Dorsolateral prefrontal cortex (tissue), 120 donors: ENCODE measurements at regions of chr12 and their contacts with region 1.

Region 1: DNA sequence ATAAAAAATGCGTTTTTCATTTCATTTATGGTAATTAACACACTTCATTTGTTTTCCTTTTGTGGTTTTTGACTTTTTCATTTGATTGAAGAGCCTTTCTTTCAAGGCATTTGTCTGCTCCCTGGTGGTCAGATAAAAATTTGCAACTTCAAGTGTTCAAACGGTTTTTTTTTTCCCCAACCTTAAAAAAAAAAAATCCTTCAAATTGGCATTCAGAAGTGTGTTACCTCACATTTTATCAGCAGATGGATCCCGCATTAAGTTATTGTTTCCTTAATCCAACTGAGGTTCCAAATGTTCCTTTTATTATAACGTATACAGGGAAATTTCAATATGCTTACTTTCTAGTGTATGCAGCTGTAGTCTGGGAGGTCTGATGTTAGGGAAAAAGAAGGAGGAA is 47.2 kb downstream of the MYF5 start:
- DNase-seq: peak in 1 of 10 donors; percentile 4
- H3K4me3 ChIP-seq: no peak overlapping the region
- H3K27ac ChIP-seq: no peak overlapping the region
- H3K27me3 ChIP-seq: no peaks in the 10 kb centered on the region
- CTCF ChIP-seq: peak; percentile 45 to 80 (median 69)

Region 2: GRCh38 chr12:80411787-80412186 is 352.1 kb before region 1 on chr12:
- intact Hi-C with region 1: loop called in 1 of 2 experiments (anchors 2 kb)
- DNase-seq: no peak
- H3K4me3 ChIP-seq: no peak overlapping the region
- H3K27ac ChIP-seq: no peak overlapping the region
- H3K27me3 ChIP-seq: no peaks in the 10 kb centered on the region
- CTCF ChIP-seq: no peak

Region 3: GRCh38 chr12:80472902-80473500 is 290.9 kb before region 1 on chr12:
- intact Hi-C with region 1: loop called in 1 of 2 experiments (anchors 5 kb)
- DNase-seq: no peak
- H3K4me3 ChIP-seq: no peak overlapping the region
- H3K27ac ChIP-seq: no peak overlapping the region
- H3K27me3 ChIP-seq: no peaks in the 10 kb centered on the region
- CTCF ChIP-seq: peak in 47 of 56 donors; percentile 5 to 52 (median 35)

Region 4: GRCh38 chr12:80648881-80649280 is 115.0 kb before region 1 on chr12:
- intact Hi-C with region 1: no loop called
- DNase-seq: no peak
- H3K4me3 ChIP-seq: no peak overlapping the region
- H3K27ac ChIP-seq: no peak overlapping the region
- H3K27me3 ChIP-seq: no peaks in the 10 kb centered on the region
- CTCF ChIP-seq: no peak

Region 5: DNA sequence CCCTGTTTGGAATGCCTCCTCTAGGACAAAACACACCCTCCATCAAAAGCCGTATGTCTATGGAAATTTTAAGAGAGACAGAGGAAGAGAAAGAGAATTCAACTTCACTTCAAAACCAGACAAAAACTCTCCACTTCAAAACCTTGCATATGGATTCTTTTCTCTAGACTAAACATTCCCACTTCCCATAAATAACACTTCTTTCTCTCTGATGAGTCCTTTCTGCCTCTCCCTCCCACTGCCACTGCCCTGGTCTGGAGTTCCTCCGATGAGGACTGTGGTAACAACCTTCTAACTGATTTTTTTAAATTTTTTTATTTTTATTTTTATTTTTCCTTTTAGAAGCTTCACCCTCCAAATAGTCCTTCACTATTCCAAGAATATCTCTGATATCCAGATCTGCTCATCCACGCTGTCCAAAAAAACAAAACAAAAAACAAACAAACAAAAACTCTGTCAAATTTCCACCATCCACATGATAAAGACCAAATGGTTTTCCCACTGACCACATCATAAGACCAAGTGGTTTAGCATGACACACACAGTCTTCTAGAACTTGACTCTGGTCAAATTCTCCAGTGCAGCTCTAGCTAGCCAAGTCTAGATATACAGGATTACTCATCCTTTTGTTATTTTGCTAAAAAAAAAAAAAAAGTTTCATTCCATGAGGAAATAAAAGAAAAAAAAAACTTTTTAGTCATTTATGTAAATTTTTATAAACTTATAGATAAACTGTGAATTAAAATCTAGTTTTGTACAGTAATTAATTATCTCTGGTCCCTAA is 739.2 kb after region 1 on chr12:
- intact Hi-C with region 1: no loop called
- DNase-seq: no peak
- H3K4me3 ChIP-seq: no peak overlapping the region
- H3K27ac ChIP-seq: no peak overlapping the region
- H3K27me3 ChIP-seq: no peaks in the 10 kb centered on the region
- CTCF ChIP-seq: no peak